ENCODE measurements at regions of chr9 and their contacts with region 1.

Region 1: GRCh38 chr9:36487482-36488388 is 85.0 kb upstream of the MELK start:
- DNase-seq: peak; percentile 91 to 94 (median 92)
- H3K4me3 ChIP-seq: peak overlapping the region; percentile 65
- H3K27ac ChIP-seq: peak overlapping the region; percentile 77 to 91
- H3K4me1 ChIP-seq: peaks cover 13% of the 10 kb centered on the region
- H3K27me3 ChIP-seq: no peaks in the 10 kb centered on the region
- CTCF ChIP-seq: peak in 2 of 3 donors; percentile 41 to 49
- EP300 ChIP-seq: no peak
- POLR2A ChIP-seq: peak; percentile 78

Region 2: DNA sequence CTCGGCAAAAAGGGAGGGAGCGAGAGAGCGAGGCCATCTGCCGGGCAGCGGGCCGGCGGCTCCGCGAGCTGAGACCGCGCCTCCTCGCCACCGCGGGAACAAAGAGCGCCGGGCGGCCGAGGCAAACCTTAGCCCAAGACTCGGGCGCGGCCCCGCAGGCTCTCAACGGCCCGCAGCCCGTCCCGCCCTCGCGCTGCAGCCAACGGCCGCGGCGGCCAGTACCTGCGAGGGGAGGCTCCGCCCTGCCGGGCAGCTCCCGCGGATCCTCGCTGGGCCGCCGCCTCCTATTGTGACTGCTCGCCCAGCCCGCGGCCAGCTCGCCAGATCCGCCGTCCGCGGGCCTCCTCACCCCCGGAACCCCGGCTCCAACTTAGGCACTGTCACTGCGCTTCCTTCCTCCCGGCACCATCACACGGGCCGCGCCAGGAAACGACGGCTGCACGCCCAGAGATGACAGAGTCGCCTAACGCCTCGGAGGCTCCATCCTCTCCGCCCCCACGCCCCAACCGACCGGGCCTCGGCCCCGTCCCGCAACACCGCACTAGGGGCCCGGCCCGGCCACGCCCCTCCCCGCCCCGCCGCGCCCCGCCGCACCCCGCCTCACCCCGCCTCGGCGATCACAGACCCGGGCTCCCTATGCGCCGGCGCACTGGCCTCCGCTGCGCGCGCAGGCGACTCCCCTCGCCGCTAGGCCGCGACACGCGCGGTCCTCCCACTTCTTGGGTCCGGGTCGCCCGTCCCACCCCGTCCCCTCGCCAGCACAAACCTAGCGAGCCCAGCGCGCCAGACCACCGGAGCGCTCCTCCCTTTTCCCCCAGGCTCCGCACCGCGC is 87.2 kb before region 1 on chr9:
- intact Hi-C with region 1: loop called in 2 of 4 experiments (anchors 10 kb)
- DNase-seq: peak; percentile 82 to 93 (median 87)
- H3K4me3 ChIP-seq: peak overlapping the region; percentile 82
- H3K27ac ChIP-seq: peak overlapping the region; percentile 87 to 93
- H3K4me1 ChIP-seq: peaks cover 4% of the 10 kb centered on the region
- H3K27me3 ChIP-seq: no peaks in the 10 kb centered on the region
- CTCF ChIP-seq: no peak
- EP300 ChIP-seq: no peak
- POLR2A ChIP-seq: no peak

Region 3: GRCh38 chr9:36597412-36598178 is 109.9 kb after region 1 on chr9:
- intact Hi-C with region 1: no loop called
- DNase-seq: no peak
- H3K4me3 ChIP-seq: no peak overlapping the region
- H3K27ac ChIP-seq: no peak overlapping the region
- H3K4me1 ChIP-seq: no peaks in the 10 kb centered on the region
- H3K27me3 ChIP-seq: no peaks in the 10 kb centered on the region
- CTCF ChIP-seq: peak in 2 of 3 donors; percentile 37 to 52
- EP300 ChIP-seq: no peak
- POLR2A ChIP-seq: no peak

Region 4: DNA sequence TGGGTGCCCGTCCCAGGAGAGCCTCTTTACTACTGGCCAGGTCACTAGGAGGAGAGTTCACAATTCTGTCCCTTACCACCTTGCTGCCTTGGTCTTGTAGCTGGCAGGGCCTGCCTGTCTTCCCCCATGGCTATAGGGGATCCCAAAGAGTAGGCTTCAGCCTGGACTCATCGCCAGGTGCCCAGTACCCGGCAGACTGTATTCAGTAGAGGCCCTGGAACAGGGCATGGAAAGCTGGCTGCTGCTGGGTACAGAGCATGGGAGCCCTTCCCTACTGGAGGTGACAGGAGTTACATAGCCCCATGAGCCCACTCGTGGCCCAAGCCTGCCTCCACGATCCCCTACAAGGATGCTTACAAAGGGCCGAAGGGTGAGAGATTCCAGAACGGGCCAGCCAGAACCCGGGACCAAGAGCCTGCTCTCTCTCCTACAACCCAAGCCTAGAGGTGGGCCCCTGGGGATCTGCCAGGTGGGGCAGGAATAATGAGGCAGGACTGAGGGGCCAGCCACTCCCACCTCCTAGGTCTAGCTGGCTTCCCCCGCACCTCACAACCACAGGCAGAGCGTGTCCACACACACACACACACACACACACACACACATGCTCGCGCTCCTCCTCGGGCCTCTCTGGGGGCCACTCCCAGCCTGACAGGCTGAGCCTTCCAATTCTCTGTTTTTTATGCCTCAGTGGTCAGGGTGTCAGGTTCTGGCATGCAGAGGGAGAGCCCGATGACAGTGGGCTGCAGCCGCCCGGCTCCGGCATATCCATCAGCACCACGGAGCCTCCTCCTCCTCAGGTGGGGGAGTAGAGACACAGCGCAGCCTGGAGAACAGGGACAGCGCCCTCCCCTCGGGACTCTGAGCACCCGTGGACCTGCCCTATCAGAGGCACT is 360.3 kb after region 1 on chr9:
- intact Hi-C with region 1: no loop called
- DNase-seq: no peak
- H3K4me3 ChIP-seq: no peak overlapping the region
- H3K27ac ChIP-seq: no peak overlapping the region
- H3K4me1 ChIP-seq: no peaks in the 10 kb centered on the region
- H3K27me3 ChIP-seq: no peaks in the 10 kb centered on the region
- CTCF ChIP-seq: no peak
- EP300 ChIP-seq: no peak
- POLR2A ChIP-seq: no peak

Region 5: DNA sequence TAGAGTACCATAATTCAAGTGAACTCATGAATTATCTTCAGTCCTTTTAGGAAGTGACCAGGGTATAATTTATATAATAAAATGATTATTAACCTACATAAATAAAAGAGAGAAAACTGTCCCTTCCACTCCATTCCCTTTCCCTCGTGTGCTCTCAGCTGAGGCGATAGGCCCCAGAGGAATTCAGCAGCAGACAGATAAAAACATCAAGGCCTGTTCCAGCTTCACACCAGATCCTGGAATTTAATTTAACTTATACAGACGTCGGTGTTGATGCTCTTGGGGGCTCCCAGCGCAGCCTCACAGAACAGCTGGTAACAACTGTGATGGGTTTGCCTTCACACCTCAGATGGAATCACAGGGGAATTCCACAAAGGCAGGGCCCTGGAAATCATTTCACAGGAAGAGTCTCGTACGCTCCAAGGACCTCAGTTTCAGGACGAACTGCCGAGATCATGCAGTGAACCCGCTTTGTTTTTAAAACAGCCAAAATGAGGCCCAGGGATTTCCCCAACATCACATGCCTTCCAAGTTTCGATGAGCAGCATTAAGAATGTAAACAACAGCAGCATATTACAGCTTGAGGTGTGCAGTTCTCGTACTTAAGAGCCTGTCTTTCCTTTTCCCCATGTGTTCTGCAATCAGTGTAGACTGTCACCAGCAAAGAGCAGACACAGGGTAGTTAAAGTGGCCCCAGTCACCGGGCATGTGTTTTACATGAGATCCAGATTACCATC is 1831.2 kb after region 1 on chr9:
- intact Hi-C with region 1: no loop called
- DNase-seq: peak in 2 of 5 donors; percentile 23 to 41
- H3K4me3 ChIP-seq: no peak overlapping the region
- H3K27ac ChIP-seq: peak overlapping the region in 1 of 2 donors; percentile 15
- H3K4me1 ChIP-seq: peaks cover 4% of the 10 kb centered on the region
- H3K27me3 ChIP-seq: no peaks in the 10 kb centered on the region
- CTCF ChIP-seq: no peak
- EP300 ChIP-seq: no peak
- POLR2A ChIP-seq: no peak

Measured in ovary (tissue), 10 donors.